Head of caudate nucleus (tissue), 42 donors: ENCODE measurements at regions of chr12 and their contacts with region 1.

Region 1: DNA sequence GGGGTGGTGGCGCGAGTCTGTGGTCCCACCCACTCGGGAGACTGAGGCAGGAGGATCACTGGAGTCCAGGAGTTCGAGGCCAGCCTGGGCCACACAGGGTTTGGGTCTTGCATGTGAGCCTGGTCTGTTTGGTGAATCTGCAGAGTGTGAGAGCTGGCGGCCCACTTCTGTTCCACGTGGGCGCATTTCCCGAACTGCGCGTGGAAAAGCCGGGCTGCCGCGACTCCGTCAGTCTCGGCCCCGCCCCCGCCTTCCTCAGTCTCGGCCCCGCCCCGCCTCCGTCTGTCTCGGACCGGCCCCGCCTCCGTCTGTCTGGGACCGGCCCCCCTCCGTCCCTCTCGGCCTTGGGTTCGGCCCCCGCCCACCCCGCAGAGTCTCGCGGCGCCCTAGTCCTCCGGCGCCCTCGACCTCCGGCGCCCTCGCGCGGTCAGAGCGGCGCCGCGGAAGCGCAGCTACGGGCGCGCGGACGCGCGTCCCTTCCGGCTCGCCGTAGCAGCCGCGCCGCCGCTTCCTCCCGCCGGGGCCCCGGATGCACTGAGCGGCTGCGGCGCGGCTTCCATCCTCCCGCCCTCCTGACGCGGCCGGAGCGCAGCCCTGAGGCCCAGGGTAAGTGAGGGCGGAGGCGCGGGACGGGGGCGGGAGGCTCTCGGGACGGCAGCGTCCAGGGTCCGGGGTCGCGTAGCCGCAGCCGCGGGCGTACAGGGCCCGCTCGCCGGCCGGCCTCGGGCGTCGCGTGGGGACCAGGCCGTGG is at the start of gene EP400:
- DNase-seq: peak; percentile 85 to 97 (median 94)

Region 2: GRCh38 chr12:131755305-131756113 is 194.1 kb before region 1 on chr12:
- intact Hi-C with region 1: no loop called
- DNase-seq: no peak

Region 3: DNA sequence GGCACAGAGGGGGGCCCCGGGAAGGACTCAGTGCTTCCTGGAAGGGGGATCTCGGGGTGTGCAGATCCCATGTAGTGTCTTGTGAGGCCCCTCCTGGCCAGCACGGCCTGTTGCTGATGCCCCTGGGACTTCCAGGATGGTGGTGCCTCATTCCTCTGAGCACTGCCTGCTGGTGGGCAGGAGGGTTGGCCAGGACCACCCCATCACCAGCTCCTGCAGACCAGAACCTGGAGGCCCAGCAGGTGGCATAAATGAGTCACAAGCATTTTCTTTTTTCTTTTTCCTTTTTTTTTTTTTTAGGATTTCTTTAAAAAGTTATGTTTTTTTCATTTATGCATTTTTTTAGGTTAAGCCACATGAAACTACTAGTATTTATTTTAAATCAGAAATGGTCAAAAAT is 113.4 kb before region 1 on chr12:
- intact Hi-C with region 1: loop called (anchors 5 kb)
- DNase-seq: peak in 1 of 42 donors; percentile 18

Region 4: DNA sequence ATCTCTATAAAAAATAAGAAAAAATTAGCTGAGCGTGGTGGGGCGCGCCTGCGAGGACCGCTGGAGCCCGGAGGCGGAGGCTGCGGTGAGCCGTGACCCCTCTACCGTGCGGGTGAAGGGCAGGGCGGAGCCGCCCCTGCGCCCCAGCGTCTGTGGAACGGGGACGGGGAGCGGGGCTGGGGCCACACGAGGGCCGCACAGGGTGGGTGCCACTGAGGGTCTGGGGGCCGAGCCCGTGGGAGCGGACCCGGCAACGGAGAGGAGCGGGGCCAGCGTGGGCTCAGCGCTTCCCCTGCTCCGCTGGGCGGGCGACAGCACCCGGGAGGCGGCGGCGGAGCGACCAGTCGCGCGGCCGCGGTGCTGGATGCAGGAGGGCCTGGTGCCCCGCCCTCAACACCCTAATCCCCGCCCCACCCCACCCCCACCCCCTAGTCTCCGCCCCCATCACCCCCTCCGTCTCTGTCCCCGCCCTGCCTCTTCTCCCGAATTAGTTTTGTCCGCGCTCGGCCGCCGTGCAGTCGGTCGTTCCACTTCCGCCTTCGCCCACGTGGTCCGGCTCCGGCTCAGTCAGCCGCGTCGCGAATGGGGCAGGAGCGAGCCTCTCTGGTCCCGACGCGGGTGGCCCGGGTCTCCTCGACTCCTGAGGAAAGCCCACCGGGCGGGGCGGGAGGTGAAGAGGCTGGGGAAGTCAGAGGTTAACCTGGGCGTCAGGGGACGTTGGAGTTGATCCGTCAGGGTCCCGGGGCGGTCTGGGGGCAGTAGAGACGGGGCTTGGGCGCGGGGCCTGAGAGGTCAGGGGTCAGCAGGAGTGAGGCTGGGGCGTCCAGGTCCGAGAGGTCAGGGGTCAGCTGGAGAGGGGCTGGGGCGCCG is 20.7 kb before region 1 on chr12 and contains the start of gene PUS1:
- intact Hi-C with region 1: loop called (anchors 2 kb)
- DNase-seq: peak; percentile 89 to 98 (median 95)

Region 5: DNA sequence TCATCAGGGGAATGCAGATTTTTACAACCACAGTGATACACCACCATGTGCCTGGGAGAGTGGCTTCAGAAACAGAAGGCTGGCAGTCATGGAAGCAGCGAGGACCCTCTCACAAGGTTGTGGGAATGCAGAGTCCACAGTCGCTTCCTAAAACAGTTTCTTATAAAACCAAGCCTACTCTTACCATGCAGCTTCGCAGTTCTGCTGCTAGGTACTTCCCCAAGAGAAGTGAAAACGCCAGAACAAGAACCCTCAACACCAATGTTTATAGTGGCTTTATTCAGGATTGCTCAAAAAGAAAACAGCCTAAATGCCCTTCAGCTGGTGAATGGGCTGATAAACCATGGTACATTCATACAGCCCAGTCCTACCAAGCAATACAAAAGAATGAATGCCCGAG is 107.3 kb after region 1 on chr12:
- intact Hi-C with region 1: no loop called
- DNase-seq: no peak

Region 6: GRCh38 chr12:132153501-132154340 is 204.1 kb after region 1 on chr12:
- intact Hi-C with region 1: no loop called
- DNase-seq: peak in 39 of 42 donors; percentile 27 to 78 (median 57)